Left cardiac atrium (tissue), 4 donors: ENCODE measurements at regions of chr10 and their contacts with region 1.

Region 1: DNA sequence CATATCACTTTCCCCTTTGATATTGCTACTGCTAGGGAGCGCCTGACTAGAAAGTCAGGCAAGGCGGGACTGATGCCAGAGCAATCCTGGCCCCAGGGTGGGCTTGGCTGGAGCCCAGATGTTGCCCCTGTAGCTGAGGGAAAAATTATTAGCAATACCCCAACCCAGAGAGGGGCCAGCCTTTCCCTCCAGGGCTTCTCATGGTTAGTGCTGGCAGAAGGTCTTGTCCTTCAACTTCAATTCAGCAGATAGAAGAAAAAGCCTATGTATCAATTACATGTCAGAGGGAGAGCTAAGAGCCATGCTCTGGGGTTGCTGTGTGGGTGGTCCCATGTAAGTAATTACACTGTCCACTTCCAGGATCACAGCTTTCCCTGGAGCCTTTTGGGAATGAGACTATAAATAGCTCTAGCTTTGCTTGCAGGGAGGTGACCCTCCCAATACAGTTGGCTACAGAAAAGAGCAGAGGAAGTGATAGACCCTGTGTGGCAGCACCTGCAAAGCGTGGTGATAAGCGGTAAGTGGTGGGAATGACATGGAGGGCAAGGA is 579.1 kb downstream of the CCSER2 start:
- DNase-seq: no peak
- ATAC-seq: no peak

Region 2: GRCh38 chr10:84862551-84862950 is 45.0 kb before region 1 on chr10:
- intact Hi-C with region 1: loop called in 1 of 2 experiments (anchors 2 kb)
- DNase-seq: no peak
- ATAC-seq: no peak

Region 3: GRCh38 chr10:84946904-84947303 is 39.4 kb after region 1 on chr10:
- intact Hi-C with region 1: no loop called
- DNase-seq: no peak
- ATAC-seq: no peak

Region 4: GRCh38 chr10:85147346-85148250 is 240.1 kb after region 1 on chr10:
- intact Hi-C with region 1: no loop called
- DNase-seq: no peak
- ATAC-seq: no peak